ENCODE measurements at regions of chr6 and their contacts with region 1.

Region 1: DNA sequence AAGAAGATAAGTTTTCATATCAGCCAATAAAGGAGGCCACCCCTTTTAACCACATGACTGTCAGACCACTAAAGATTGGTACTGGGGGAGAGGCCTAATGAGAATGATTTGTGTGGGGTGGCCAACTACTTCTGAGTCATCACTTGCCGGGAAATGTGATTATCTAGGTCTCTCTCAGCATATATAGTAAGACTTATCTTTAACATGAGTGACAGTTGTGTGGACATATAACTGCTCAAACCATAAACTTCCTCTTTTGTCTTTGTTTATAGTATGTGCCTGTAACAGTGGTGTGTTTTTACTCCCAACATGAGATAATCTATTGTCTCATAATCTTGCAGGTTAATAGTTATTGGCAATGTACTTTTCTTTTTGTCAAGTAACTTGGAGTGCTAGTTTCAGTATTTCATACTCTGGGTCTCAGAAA is 312.4 kb downstream of the CDKAL1 start:
- DNase-seq: no peak
- ATAC-seq: no peak
- H3K4me3 ChIP-seq: no peak overlapping the region
- H3K4me3 Mint-ChIP-seq: no peak overlapping the region
- H3K27ac ChIP-seq: no peak overlapping the region
- H3K27ac Mint-ChIP-seq: no peak overlapping the region
- H3K4me1 ChIP-seq: no peaks in the 10 kb centered on the region
- H3K4me1 Mint-ChIP-seq: peaks cover 0 to 2% (median 0%) of the 10 kb centered on the region in 3 donors
- H3K27me3 ChIP-seq: no peaks in the 10 kb centered on the region
- H3K27me3 Mint-ChIP-seq: no peaks in the 10 kb centered on the region

Region 2: GRCh38 chr6:19175023-19175422 is 1671.6 kb before region 1 on chr6:
- CTCF ChIA-PET with region 1: no interaction called
- POLR2A ChIA-PET with region 1: interaction called in 1 of 2 experiments, 12 read pairs
- DNase-seq: no peak
- ATAC-seq: no peak
- H3K4me3 ChIP-seq: no peak overlapping the region
- H3K4me3 Mint-ChIP-seq: no peak overlapping the region
- H3K27ac ChIP-seq: no peak overlapping the region
- H3K27ac Mint-ChIP-seq: no peak overlapping the region
- H3K4me1 ChIP-seq: no peaks in the 10 kb centered on the region
- H3K4me1 Mint-ChIP-seq: no peaks in the 10 kb centered on the region
- H3K27me3 ChIP-seq: no peaks in the 10 kb centered on the region
- H3K27me3 Mint-ChIP-seq: no peaks in the 10 kb centered on the region

Region 3: DNA sequence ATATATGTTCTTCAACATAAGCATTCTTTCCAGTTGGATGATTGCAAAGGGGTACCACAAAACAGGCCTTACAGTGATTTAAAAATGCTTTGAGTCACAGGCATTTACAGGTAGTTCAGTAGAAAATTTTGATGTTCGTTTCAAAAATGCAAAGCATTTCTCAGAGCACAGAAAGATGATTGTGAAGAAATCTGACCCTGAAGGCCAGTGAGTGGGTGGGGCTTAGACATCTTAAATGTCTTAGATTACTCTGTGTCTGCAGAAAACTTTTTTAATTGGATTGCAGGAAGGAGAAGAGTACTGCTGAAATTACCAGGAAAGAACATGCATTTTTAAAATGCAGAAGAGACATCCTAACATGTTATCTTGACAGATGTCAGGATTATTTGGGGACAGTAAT is 44.0 kb before region 1 on chr6:
- CTCF ChIA-PET with region 1: no interaction called
- POLR2A ChIA-PET with region 1: no interaction called
- DNase-seq: no peak
- ATAC-seq: no peak
- H3K4me3 ChIP-seq: no peak overlapping the region
- H3K4me3 Mint-ChIP-seq: no peak overlapping the region
- H3K27ac ChIP-seq: no peak overlapping the region
- H3K27ac Mint-ChIP-seq: no peak overlapping the region
- H3K4me1 ChIP-seq: no peaks in the 10 kb centered on the region
- H3K4me1 Mint-ChIP-seq: no peaks in the 10 kb centered on the region
- H3K27me3 ChIP-seq: no peaks in the 10 kb centered on the region
- H3K27me3 Mint-ChIP-seq: no peaks in the 10 kb centered on the region

Region 4: DNA sequence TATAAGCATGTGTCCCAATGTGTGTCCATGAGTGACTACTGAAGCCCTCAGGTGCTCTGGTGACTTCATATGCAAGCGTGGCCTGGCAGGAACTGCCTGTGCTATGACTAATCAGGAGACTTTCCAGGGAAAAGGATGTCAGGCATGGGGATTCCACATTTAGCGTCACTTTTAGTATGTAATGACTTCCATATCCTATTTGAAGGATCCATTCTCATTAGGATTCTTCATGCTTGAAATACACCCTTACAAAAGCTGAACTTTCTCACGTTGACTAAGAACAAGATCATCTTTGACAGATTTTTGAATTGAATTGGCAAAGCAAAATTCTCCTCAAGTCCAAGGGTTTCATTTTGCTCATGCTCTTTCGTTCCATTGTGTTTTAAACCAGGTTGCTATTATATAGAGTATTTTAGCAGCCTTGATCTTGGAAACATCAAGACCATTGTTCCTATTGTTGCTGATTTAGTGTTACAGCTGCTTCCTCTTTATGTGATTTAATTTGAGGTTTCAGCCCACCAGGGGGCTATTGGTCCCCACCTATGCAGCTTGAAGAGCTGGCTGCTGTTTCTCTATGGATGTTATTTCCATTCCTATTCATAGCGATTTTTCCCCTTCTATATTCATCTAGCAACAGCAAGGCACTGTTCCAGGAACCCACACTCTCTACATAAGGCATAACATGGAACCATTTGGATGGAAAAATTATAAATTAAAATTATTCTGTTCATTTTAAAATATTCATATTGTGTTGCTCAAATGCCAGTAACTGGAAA is 106.3 kb after region 1 on chr6:
- CTCF ChIA-PET with region 1: no interaction called
- POLR2A ChIA-PET with region 1: no interaction called
- DNase-seq: no peak
- ATAC-seq: no peak
- H3K4me3 ChIP-seq: no peak overlapping the region
- H3K4me3 Mint-ChIP-seq: no peak overlapping the region
- H3K27ac ChIP-seq: no peak overlapping the region
- H3K27ac Mint-ChIP-seq: no peak overlapping the region
- H3K4me1 ChIP-seq: no peaks in the 10 kb centered on the region
- H3K4me1 Mint-ChIP-seq: no peaks in the 10 kb centered on the region
- H3K27me3 ChIP-seq: no peaks in the 10 kb centered on the region
- H3K27me3 Mint-ChIP-seq: no peaks in the 10 kb centered on the region